ENCODE measurements at regions of chr5 and their contacts with region 1.

Region 1: GRCh38 chr5:176660860-176661641 is 13.8 kb downstream of the TSPAN17 start:
- ATAC-seq: peak; percentile 63 to 91 (median 78)
- H3K4me3 ChIP-seq: no peak overlapping the region
- H3K27ac ChIP-seq: no peak overlapping the region
- H3K4me1 ChIP-seq: peaks cover 12% of the 10 kb centered on the region in 2 donors

Region 2: DNA sequence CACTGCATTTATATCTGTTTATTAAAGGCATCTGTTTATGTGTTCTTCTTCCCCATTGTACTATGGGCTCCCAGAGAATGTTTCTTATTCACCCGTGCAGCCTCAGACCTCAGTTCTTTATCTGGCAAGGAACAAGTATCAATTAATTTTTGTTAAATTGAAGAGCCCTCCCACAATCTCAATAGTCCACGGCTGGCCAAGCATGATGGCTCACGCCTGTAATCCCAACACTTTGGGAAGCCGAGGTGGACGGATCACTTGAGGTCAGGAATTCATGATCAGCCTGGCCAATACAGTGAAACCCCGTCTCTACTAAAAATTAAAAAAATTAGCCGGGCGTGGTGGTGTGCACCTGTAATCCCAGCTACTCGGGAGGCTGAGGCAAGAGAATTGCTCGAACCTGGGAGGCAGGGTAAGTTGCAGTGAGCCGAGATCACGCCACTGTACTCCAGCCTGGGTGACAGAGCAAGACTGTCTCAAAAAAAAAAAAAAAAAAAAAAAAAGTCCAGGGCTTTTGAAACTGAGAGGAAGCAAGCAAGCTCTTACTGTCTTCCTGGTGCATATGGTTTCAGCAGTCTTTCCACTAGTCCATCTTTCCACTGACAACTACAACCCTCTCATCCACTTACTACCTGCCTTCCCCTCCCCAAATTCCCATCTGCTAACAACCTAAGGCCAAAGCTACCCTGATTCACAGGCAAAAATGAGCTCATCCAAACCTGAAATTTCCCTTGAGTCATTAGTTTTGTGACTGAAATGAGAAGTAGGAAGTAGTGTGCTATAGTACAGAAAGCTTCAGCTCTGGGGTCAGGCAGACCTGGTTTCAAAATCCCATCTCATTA is 240.4 kb after region 1 on chr5:
- in situ Hi-C with region 1: loop called in 1 of 9 experiments (anchors 25 kb)
- ATAC-seq: no peak
- H3K4me3 ChIP-seq: no peak overlapping the region
- H3K27ac ChIP-seq: no peak overlapping the region
- H3K4me1 ChIP-seq: no peaks in the 10 kb centered on the region

Region 3: DNA sequence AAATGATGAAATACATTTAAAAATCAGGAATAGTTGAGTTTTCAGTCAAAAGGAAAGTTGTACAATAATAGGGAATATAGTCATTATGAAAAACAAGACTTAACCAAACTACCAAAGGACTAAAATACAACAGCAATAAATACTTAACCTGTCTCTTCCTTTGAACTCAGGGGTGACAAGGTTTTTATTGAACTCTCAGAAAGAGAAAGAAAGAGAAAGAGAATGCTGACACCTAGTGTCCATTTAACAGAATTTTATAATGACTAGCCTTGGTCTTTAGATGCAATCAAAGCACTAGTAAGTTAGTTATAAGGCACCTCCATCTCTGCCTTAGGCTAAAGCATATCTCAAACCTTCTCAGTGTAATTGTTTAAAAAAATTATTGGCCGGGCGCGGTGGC is 298.0 kb after region 1 on chr5:
- in situ Hi-C with region 1: loop called in 2 of 9 experiments (anchors 25 kb)
- ATAC-seq: peak in 4 of 8 experiments; percentile 35 to 57 (median 43)
- H3K4me3 ChIP-seq: no peak overlapping the region
- H3K27ac ChIP-seq: no peak overlapping the region
- H3K4me1 ChIP-seq: no peaks in the 10 kb centered on the region

Region 4: GRCh38 chr5:177113566-177114424 is 452.7 kb after region 1 on chr5:
- in situ Hi-C with region 1: loop called in 6 of 9 experiments (anchors 10 to 25 kb)
- ATAC-seq: peak; percentile 41 to 70 (median 60)
- H3K4me3 ChIP-seq: no peak overlapping the region
- H3K27ac ChIP-seq: no peak overlapping the region
- H3K4me1 ChIP-seq: no peaks in the 10 kb centered on the region